ENCODE measurements at regions of chr10 and their contacts with region 1.

Region 1: GRCh38 chr10:102342958-102343357 is 52.5 kb upstream of the NFKB2 start:
- DNase-seq: no peak
- ATAC-seq: no peak
- H3K4me3 Mint-ChIP-seq: no peak overlapping the region
- H3K27ac Mint-ChIP-seq: no peak overlapping the region
- H3K4me1 Mint-ChIP-seq: peaks cover 3% of the 10 kb centered on the region
- H3K27me3 Mint-ChIP-seq: no peaks in the 10 kb centered on the region

Region 2: DNA sequence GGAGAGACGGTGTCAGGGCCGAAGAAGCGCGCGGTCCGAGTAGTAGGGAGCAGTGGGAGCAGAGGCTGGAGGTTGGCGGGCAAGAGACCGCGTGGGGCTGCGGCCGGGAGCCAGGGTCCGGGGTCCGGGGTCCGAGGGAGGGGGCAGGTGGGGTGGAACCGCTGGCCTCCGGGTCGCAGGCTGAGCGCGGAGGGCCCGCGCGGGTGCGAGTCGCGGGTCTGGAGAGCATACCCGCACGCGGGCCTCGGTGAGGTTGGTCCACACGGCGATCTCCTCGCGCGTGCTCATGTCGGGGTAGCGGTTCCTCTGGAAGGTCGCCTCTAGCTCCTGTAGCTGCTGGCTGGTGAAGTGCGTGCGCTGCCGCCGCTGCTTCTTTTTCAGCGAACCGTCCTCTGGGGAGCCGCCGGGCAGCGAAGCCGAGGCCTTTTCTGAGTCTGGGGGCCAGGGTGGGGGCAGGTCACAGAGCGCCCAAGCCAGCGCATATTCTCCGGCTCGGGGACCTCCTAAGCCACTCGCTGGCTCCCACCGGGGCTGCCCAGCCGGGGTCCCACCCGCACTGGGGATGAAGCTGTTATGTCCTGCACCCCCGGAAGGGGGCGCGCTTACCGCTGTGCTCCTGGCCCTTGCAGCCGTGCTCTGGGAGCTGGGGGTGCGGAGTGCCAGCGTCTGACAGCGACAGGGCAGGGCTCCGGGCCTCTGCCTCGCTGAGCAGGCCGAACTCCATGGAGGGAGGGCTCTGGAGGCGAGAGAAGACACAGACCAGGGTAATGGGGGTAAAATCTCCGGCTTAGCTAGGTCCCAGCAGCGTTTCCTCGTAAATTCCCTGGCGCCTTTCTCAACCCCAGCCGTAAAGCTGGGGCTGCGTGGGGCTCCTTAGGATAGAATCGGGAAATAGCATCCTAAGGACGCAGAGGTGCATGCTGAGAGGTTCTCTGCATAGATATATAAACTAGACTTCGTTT is 111.3 kb before region 1 on chr10:
- CTCF ChIA-PET with region 1: interaction called, 824 read pairs
- DNase-seq: peak; percentile 77
- ATAC-seq: peak; percentile 72
- H3K4me3 Mint-ChIP-seq: peak overlapping the region; percentile 62
- H3K27ac Mint-ChIP-seq: no peak overlapping the region
- H3K4me1 Mint-ChIP-seq: peaks cover 12% of the 10 kb centered on the region
- H3K27me3 Mint-ChIP-seq: peaks cover 69% of the 10 kb centered on the region

Region 3: DNA sequence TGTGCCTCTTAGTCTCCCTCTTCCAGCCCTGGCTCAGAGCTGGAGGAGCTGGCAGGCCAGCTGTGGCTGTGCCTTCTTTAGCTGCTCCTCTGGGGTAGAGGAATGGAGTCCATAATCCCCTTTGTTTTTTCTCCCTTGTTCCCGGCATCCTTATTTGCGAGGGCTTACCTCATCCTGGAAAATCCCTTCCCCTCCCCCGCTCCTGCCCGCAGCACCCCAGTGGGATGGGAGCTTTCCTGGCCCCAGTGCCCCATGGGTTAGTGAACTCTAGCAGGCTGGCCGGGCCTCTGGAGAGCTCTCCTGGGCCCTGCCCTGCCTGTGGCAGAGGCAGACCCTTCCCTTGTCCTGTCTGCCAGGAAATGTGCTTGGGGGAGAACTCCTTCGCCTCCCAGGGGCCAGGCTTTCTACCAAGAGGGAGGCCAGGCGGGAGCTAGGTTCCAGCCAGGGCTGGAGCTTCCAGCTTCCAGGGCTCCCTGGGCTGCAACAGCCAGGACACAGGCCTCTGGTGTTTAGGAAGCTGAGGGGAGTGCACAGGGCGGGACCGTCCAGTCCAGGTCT is 284.9 kb after region 1 on chr10:
- CTCF ChIA-PET with region 1: no interaction called
- DNase-seq: no peak
- ATAC-seq: no peak
- H3K4me3 Mint-ChIP-seq: no peak overlapping the region
- H3K27ac Mint-ChIP-seq: no peak overlapping the region
- H3K4me1 Mint-ChIP-seq: peaks cover 22% of the 10 kb centered on the region
- H3K27me3 Mint-ChIP-seq: no peaks in the 10 kb centered on the region